ENCODE measurements at regions of chr1 and their contacts with region 1.

Region 1: GRCh38 chr1:38848071-38848470 is 11.5 kb downstream of the RRAGC start:
- DNase-seq: no peak
- H3K4me3 ChIP-seq: no peak overlapping the region
- H3K27ac ChIP-seq: no peak overlapping the region
- H3K4me1 ChIP-seq: no peaks in the 10 kb centered on the region
- H3K27me3 ChIP-seq: no peaks in the 10 kb centered on the region
- CTCF ChIP-seq: no peak
- POLR2A ChIP-seq: no peak

Region 2: DNA sequence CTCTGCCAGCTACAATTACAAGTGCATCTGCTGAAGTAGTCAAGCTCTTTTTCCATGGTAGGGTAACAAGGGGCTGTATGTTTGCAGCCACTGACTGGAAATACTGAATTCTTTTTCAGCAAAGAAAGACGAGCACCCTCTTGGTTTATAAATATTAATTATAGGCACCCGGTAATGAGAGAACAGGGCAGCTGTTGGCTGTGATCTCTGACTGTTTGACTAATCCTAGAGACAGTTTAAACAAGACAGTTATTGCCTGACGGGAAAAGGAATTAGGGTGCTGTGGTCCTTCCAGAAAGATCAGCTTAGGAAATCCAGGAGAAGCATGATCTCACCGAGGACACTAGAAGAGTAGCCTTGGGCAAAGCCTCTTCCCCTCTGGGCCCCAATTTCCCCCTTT is 1557.4 kb before region 1 on chr1:
- intact Hi-C with region 1: no loop called
- DNase-seq: no peak
- H3K4me3 ChIP-seq: no peak overlapping the region
- H3K27ac ChIP-seq: no peak overlapping the region
- H3K4me1 ChIP-seq: no peaks in the 10 kb centered on the region
- H3K27me3 ChIP-seq: peaks cover 0 to 11% of the 10 kb centered on the region in 2 donors
- CTCF ChIP-seq: no peak
- POLR2A ChIP-seq: no peak

Region 3: DNA sequence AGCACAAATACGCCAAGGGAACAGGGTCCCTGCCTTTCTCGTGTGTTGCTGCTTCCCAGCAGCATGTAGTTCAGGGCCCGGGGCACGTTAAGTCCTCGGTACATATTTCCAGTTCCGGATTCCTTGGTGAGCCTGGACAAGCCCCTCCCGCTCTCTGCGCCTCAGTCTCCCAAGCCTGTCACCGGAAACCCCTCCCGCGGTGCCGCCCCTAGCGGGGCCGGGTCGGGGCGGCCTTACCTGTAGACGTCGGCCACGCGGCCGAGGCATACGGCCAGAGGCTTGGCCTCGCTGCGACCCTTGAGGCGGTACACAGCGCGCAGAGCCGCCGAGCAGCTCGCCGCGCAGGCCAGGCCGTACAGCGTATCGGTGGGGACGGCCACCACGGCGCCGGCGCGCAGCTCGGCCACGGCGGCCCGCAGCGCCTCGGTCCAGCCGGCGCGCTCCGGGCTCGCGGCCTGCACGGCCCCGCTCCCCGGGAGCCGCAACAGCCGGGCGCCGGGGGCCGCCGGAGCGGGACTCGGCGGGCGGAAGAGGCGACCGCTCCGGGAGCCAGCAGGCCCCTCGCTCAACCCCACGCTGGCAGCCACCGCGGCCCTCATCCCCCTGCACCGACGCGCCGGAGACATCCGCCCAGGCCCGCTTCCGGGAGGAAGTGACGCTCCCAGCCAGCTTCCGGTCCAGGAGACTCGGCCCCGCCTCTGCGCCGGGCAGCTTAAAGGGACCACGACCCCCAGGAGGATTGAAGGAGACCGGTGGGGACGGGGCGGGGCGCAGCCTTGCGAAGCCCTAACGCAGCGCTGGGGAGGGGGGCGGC is 1040.3 kb before region 1 on chr1 and contains the starts of genes C1orf122 and YRDC:
- intact Hi-C with region 1: loop called (anchors 5 kb)
- DNase-seq: peak; percentile 90 to 94
- H3K4me3 ChIP-seq: peak within 1 kb of the TSS; percentile 88 to 98 (median 96)
- H3K27ac ChIP-seq: peak within 1 kb of the TSS; percentile 93 to 98
- H3K4me1 ChIP-seq: peaks cover 4 to 14% of the 10 kb centered on the region in 2 donors
- H3K27me3 ChIP-seq: no peaks in the 10 kb centered on the region
- CTCF ChIP-seq: no peak
- POLR2A ChIP-seq: peak; percentile 68
- total RNA-seq, gene C1orf122: 58.5 to 64.6 (median 58.9) TPM
- total RNA-seq, gene YRDC: 11.6 to 19.3 (median 12.5) TPM

Region 4: GRCh38 chr1:38818175-38818976 is 29.7 kb before region 1 on chr1:
- intact Hi-C with region 1: no loop called
- DNase-seq: no peak
- H3K4me3 ChIP-seq: peak overlapping the region in 2 of 3 donors; percentile 35 to 60
- H3K27ac ChIP-seq: no peak overlapping the region
- H3K4me1 ChIP-seq: peaks cover 0 to 6% of the 10 kb centered on the region in 2 donors
- H3K27me3 ChIP-seq: peaks cover 0 to 32% of the 10 kb centered on the region in 2 donors
- CTCF ChIP-seq: peak in 1 of 3 donors; percentile 64
- POLR2A ChIP-seq: no peak

Measured in breast epithelium (tissue), 4 donors.